CD8-positive, alpha-beta T cell (primary cell): ENCODE measurements at regions of chr7 and their contacts with region 1.

Region 1: GRCh38 chr7:101519324-101520023 is 109.6 kb downstream of the MYL10 start:
- DNase-seq: no peak
- ATAC-seq: no peak
- H3K4me3 ChIP-seq: no peak overlapping the region
- H3K4me3 Mint-ChIP-seq: no peak overlapping the region
- H3K27ac ChIP-seq: no peak overlapping the region
- H3K27ac Mint-ChIP-seq: no peak overlapping the region
- H3K4me1 ChIP-seq: no peaks in the 10 kb centered on the region
- H3K4me1 Mint-ChIP-seq: no peaks in the 10 kb centered on the region
- H3K27me3 ChIP-seq: no peaks in the 10 kb centered on the region
- H3K27me3 Mint-ChIP-seq: no peaks in the 10 kb centered on the region
- CTCF ChIP-seq: no peak

Region 2: DNA sequence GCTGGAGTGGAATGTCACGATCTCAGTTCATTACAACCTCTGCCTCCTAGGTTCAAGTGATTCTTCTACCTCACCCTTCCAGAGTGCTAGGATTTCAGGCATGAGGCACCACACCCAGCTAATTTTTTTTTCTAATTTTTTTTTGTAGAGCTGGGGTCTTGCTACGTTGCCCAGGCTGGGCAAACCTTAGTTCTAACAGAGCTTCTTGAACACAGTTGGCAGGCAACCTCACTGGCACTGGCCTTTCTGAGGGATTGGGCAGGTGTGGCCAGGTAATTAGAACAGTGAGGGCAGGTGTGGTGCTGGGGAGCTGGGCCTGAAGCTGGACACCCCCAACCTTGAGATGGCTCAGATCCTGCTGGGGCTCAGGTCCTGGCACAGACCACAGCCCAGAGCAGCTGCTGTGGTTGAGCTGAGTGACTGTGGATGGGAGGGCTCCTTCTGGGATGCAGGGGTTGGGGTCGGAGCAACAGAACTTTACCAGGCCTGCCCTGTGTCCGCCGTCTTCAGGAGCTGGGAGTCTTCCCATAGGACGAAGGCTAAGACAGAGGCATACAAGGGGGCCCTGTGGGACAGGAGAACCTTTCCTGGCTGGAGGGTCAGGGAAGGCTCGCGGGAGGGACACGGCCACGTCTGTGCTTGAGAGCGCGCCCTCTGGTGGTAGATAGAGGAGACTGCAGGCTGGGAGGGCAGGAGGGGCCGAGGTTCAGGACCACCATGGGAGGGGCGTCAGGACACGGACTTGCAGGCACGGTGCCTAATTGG is 108.5 kb before region 1 on chr7:
- CTCF ChIA-PET with region 1: no interaction called
- POLR2A ChIA-PET with region 1: no interaction called
- intact Hi-C with region 1: no loop called
- DNase-seq: peak in 8 of 9 experiments; percentile 17 to 73 (median 46)
- ATAC-seq: peak; percentile 51
- H3K4me3 ChIP-seq: no peak overlapping the region
- H3K4me3 Mint-ChIP-seq: no peak overlapping the region
- H3K27ac ChIP-seq: no peak overlapping the region
- H3K27ac Mint-ChIP-seq: no peak overlapping the region
- H3K4me1 ChIP-seq: peaks cover 4% of the 10 kb centered on the region
- H3K4me1 Mint-ChIP-seq: peaks cover 5% of the 10 kb centered on the region
- H3K27me3 ChIP-seq: no peaks in the 10 kb centered on the region
- H3K27me3 Mint-ChIP-seq: peaks cover 9% of the 10 kb centered on the region
- CTCF ChIP-seq: peak; percentile 86

Region 3: DNA sequence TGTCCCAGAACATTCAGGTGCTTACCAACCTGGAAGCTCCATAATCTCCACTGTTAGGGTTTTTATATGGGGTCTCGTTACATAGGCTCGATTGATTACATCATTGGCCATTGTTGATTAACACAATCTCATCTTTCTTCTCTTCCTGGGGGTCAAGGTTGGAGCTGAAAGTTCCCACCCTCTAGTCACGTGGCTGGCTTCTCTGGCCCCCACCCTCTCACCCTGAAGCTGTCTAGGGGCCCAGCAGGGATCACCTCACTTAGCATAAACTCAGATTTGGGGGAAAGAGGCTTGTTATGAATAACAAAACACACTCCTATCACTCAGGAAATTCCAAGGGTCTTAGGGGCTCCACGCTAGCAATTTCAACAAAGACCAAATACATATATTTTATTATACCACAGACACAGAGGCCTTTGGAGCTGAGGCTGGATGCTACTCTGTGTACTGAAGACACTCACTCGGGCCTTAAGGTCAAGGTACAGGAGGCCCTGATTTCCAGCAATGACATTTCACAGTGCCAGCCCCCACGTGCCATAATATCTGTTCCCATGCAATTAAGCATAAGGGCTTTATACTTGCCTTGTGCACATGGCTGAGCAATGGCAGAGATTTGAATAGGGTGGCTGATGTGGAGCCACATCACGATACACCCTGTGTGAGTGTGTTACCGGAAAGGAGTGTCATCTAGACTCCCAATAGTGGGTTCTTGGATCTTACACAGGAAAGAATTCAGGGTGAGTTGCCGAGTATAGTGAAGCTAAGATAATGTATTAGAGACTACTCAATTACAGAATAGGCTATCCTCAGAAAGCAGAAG is 48.6 kb before region 1 on chr7:
- CTCF ChIA-PET with region 1: interaction called, 3 read pairs
- POLR2A ChIA-PET with region 1: no interaction called
- intact Hi-C with region 1: loop called in 1 of 2 experiments (anchors 5 kb)
- DNase-seq: no peak
- ATAC-seq: no peak
- H3K4me3 ChIP-seq: no peak overlapping the region
- H3K4me3 Mint-ChIP-seq: no peak overlapping the region
- H3K27ac ChIP-seq: no peak overlapping the region
- H3K27ac Mint-ChIP-seq: no peak overlapping the region
- H3K4me1 ChIP-seq: peaks cover 3% of the 10 kb centered on the region
- H3K4me1 Mint-ChIP-seq: peaks cover 3% of the 10 kb centered on the region
- H3K27me3 ChIP-seq: no peaks in the 10 kb centered on the region
- H3K27me3 Mint-ChIP-seq: no peaks in the 10 kb centered on the region
- CTCF ChIP-seq: no peak

Region 4: GRCh38 chr7:101537205-101537604 is 17.7 kb after region 1 on chr7:
- CTCF ChIA-PET with region 1: no interaction called
- POLR2A ChIA-PET with region 1: no interaction called
- intact Hi-C with region 1: no loop called
- DNase-seq: no peak
- ATAC-seq: no peak
- H3K4me3 ChIP-seq: no peak overlapping the region
- H3K4me3 Mint-ChIP-seq: no peak overlapping the region
- H3K27ac ChIP-seq: no peak overlapping the region
- H3K27ac Mint-ChIP-seq: no peak overlapping the region
- H3K4me1 ChIP-seq: no peaks in the 10 kb centered on the region
- H3K4me1 Mint-ChIP-seq: peaks cover 2% of the 10 kb centered on the region
- H3K27me3 ChIP-seq: no peaks in the 10 kb centered on the region
- H3K27me3 Mint-ChIP-seq: peaks cover 4% of the 10 kb centered on the region
- CTCF ChIP-seq: no peak